MCF 10A (cell line): ENCODE measurements at regions of chr18 and their contacts with region 1.

Region 1: GRCh38 chr18:12271376-12272235 is 17.4 kb downstream of the CIDEA start:
- DNase-seq: peak; percentile 84
- H3K4me3 Mint-ChIP-seq: peak overlapping the region; percentile 74
- H3K27ac Mint-ChIP-seq: peak overlapping the region; percentile 51
- H3K4me1 Mint-ChIP-seq: no peaks in the 10 kb centered on the region
- H3K27me3 Mint-ChIP-seq: peaks cover 9% of the 10 kb centered on the region
- CTCF ChIP-seq: peak; percentile 80

Region 2: DNA sequence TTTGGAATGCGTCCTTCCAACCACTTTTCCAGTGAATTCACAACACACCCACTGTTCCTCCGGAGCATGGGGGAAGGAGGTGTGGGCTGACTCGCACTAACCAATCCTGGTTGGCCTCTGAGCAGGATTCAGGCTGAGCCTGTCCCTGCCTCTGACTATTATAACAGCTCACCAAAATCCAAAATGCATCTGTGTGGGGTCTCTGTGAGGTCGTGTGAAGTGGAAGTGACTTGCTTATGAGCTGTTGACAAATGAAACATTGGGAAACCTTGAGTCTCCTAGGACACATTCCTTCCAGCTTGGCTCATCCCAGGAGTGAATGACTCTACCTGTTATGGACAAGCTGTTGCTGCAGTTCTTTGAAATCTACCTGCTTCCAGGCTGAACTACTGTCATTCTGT is 16.0 kb before region 1 on chr18:
- CTCF ChIA-PET with region 1: interaction called, 10 read pairs
- POLR2A ChIA-PET with region 1: interaction called, 3 read pairs
- intact Hi-C with region 1: no loop called
- DNase-seq: peak; percentile 29
- H3K4me3 Mint-ChIP-seq: no peak overlapping the region
- H3K27ac Mint-ChIP-seq: no peak overlapping the region
- H3K4me1 Mint-ChIP-seq: peaks cover 21% of the 10 kb centered on the region
- H3K27me3 Mint-ChIP-seq: no peaks in the 10 kb centered on the region
- CTCF ChIP-seq: no peak

Region 3: DNA sequence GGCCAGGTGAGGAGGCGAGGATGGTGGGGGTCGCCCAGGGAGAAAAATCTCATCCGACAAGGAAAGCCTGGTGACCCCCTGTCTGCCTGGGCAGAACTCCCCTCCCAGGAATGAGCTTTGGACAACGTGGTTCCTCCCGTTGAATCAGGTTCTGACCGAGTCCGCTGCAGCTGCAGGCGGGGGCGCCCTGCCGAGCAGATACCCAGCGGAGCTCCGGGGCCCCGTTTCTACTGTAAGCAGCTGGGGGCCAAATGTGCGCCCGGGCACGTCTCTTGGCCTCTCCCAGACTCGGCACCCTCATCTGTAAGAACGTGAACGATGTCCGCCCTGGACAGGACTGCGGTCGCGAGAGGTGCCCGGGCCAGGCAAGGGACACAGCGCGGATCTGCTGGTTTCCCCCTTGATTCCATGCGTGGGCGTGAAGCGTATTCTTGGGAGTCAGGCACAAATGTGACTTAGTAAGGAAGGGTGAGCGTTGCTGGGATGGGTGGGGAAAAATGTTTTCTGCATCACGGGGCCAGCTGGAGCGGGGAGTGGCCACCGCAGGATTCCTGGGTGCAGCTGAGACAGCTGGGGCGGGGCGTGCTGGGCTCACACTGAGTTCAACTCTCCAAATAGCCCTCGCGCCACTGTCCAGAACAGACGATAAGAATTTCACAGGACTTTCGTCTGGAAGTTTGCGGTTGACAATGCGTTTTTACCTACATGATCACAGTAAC is 16.2 kb after region 1 on chr18:
- CTCF ChIA-PET with region 1: interaction called, 22 read pairs
- POLR2A ChIA-PET with region 1: interaction called, 17 read pairs
- intact Hi-C with region 1: no loop called
- DNase-seq: peak; percentile 78
- H3K4me3 Mint-ChIP-seq: peak overlapping the region; percentile 82
- H3K27ac Mint-ChIP-seq: peak overlapping the region; percentile 99
- H3K4me1 Mint-ChIP-seq: peaks cover 22% of the 10 kb centered on the region
- H3K27me3 Mint-ChIP-seq: no peaks in the 10 kb centered on the region
- CTCF ChIP-seq: no peak

Region 4: GRCh38 chr18:12308386-12309100 is 36.9 kb after region 1 on chr18:
- CTCF ChIA-PET with region 1: interaction called, 18 read pairs
- POLR2A ChIA-PET with region 1: interaction called, 234 read pairs
- intact Hi-C with region 1: loop called (anchors 2 kb)
- DNase-seq: peak; percentile 85
- H3K4me3 Mint-ChIP-seq: peak overlapping the region; percentile 86
- H3K27ac Mint-ChIP-seq: peak overlapping the region; percentile 87
- H3K4me1 Mint-ChIP-seq: peaks cover 20% of the 10 kb centered on the region
- H3K27me3 Mint-ChIP-seq: no peaks in the 10 kb centered on the region
- CTCF ChIP-seq: no peak

Region 5: DNA sequence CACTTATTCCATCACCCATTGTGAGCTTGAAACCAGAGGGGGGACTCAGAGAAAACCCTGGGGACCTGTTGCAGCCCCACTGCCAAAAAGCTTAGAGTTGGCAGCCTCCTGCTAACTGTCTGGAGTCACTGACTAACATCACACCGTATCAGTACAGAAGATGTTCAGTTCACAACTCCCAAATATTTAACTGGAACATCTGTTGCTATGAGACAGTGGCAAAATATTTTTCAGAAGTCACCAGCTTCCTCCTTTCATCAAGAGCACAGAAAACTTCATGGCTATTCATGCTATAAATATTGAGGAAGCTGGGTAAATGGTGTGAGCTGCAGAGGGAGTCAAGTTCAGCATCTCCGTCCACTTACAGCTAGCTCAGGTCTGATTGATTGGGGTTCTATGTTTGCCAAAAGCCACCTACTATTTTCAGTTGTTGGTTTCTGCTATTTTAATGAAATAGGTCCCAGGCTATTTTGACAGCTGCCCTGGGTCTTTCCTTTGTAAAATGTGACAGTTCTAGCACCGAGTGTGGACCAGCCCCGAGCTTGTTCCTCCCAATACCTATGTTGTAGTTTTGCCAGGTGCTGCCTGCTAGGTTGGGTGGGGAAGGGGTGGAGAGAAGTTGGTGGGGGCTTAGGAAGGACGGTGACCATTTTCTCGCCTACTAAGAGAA is 46.2 kb after region 1 on chr18:
- CTCF ChIA-PET with region 1: interaction called, 12 read pairs
- POLR2A ChIA-PET with region 1: interaction called, 4 read pairs
- intact Hi-C with region 1: no loop called
- DNase-seq: no peak
- H3K4me3 Mint-ChIP-seq: no peak overlapping the region
- H3K27ac Mint-ChIP-seq: peak overlapping the region; percentile 23
- H3K4me1 Mint-ChIP-seq: peaks cover 17% of the 10 kb centered on the region
- H3K27me3 Mint-ChIP-seq: no peaks in the 10 kb centered on the region
- CTCF ChIP-seq: no peak